Posterior vena cava (tissue), 2 donors: ENCODE measurements at regions of chr16 and their contacts with region 1.

Region 1: DNA sequence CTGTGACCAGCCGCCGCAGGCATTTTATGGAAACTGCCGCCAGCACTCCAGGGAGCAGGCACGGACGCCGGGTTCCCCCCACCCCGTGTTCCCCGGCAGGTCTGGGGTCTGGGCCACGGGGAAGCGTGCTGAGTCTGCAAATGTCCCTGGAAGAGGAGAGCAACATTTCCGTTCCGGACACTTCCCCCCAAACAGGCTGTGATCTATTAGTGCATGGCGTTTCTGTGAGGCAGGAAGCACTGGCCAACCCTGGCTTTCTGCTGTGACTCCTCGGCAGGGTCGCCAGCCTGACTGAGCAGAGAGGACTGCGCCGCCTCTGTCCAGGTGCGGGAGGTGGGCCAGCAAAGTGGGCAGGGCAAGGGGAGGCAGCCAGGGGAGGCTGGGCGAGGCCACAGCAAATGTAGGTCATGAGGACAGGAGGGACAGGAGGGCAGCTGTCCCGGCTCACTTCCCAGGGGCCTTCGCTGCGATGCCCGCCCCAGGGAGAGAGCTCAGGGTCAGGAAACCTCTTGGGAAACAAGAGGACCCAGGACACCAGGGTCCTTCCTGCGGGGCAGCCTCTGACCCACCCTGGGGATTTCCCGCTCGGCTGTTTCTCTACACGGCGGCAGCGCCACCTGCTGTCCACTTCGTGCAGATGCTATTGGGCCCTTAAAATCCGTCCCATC is 9.5 kb downstream of the FOXF1 start:
- DNase-seq: peak; percentile 89

Region 2: GRCh38 chr16:86072328-86073102 is 447.3 kb before region 1 on chr16:
- intact Hi-C with region 1: loop called (anchors 2 kb)
- DNase-seq: peak; percentile 88

Region 3: GRCh38 chr16:86343027-86343787 is 176.6 kb before region 1 on chr16:
- intact Hi-C with region 1: loop called (anchors 5 kb)
- DNase-seq: peak; percentile 92

Region 4: GRCh38 chr16:88411951-88412576 is 1892.3 kb after region 1 on chr16:
- intact Hi-C with region 1: loop called in 1 of 2 experiments (anchors 5 kb)
- DNase-seq: no peak